SK-N-SH (cell line): ENCODE measurements at regions of chr10 and their contacts with region 1.

Region 1: DNA sequence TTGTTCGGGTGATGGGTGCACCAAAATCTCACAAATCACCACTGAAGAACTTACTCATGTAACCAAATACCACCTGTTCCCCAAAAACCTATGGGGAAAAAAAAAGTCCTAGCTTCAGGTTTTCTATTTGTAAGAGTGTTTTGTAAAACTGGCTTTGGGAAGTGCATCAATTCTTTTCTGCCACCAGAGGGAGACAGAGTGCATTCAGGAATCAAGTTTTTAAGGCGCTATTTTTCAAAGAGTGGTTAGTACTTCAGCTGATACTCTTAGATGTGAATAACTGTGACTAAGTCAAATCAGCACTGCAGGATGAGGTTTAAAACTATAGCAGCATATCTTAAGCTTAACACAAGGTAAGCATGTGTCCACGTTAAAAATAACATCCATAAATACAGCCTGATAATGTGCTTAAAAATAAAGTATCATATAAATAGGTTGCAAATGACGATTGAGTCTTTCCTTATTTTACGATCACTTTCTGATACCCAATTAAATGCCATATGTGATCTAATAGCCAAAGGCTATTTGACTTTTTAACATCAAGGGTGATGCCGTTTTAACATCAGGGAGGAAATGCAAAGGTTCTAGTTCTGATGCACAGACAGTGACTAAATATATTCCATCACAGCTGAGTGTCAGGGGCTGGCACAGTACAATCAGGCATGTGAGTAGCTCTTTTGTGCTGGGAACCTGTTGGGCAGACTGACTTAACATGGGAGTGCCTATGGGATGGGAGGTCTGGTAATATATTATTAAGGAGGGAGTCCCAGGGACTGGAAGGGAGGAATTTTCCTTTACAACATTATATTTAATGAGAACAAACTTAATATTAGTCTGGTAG is 10.6 kb upstream of the LYZL2 start:
- DNase-seq: peak; percentile 48
- H3K4me3 ChIP-seq: peak overlapping the region in 1 of 2 experiments; percentile 23; a peak in 1 of 4 replicates
- H3K27ac ChIP-seq: no peak overlapping the region
- H3K4me1 ChIP-seq: no peaks in the 10 kb centered on the region
- H3K27me3 ChIP-seq: no peaks in the 10 kb centered on the region
- CTCF ChIP-seq: peak; percentile 94
- EP300 ChIP-seq: no peak
- RAD21 ChIP-seq: peak; percentile 56

Region 2: GRCh38 chr10:30581779-30582380 is 58.3 kb before region 1 on chr10:
- CTCF ChIA-PET with region 1: interaction called, 13 read pairs
- POLR2A ChIA-PET with region 1: no interaction called
- DNase-seq: peak; percentile 68
- H3K4me3 ChIP-seq: no peak overlapping the region; a peak in 1 of 4 replicates
- H3K27ac ChIP-seq: no peak overlapping the region
- H3K4me1 ChIP-seq: peaks cover 3 to 4% of the 10 kb centered on the region in 2 experiments; a peak in 2 of 4 replicates
- H3K27me3 ChIP-seq: no peaks in the 10 kb centered on the region
- CTCF ChIP-seq: peak; percentile 89
- EP300 ChIP-seq: no peak
- RAD21 ChIP-seq: peak; percentile 59

Region 3: GRCh38 chr10:30606313-30606712 is 33.9 kb before region 1 on chr10:
- CTCF ChIA-PET with region 1: interaction called, 14 read pairs
- POLR2A ChIA-PET with region 1: no interaction called
- DNase-seq: no peak
- H3K4me3 ChIP-seq: no peak overlapping the region
- H3K27ac ChIP-seq: no peak overlapping the region
- H3K4me1 ChIP-seq: peaks cover 0 to 2% of the 10 kb centered on the region in 2 experiments; a peak in 1 of 4 replicates
- H3K27me3 ChIP-seq: no peaks in the 10 kb centered on the region
- CTCF ChIP-seq: no peak
- EP300 ChIP-seq: no peak
- RAD21 ChIP-seq: no peak

Region 4: GRCh38 chr10:30625080-30625479 is 15.1 kb before region 1 on chr10:
- CTCF ChIA-PET with region 1: interaction called, 31 read pairs
- POLR2A ChIA-PET with region 1: no interaction called
- DNase-seq: no peak
- H3K4me3 ChIP-seq: no peak overlapping the region
- H3K27ac ChIP-seq: no peak overlapping the region
- H3K4me1 ChIP-seq: no peaks in the 10 kb centered on the region; a peak in 1 of 4 replicates
- H3K27me3 ChIP-seq: no peaks in the 10 kb centered on the region
- CTCF ChIP-seq: no peak
- EP300 ChIP-seq: no peak
- RAD21 ChIP-seq: no peak

Region 5: GRCh38 chr10:30656233-30656632 is 16.1 kb after region 1 on chr10:
- CTCF ChIA-PET with region 1: interaction called, 24 read pairs
- POLR2A ChIA-PET with region 1: no interaction called
- DNase-seq: no peak
- H3K4me3 ChIP-seq: no peak overlapping the region
- H3K27ac ChIP-seq: no peak overlapping the region
- H3K4me1 ChIP-seq: no peaks in the 10 kb centered on the region; a peak in 2 of 4 replicates
- H3K27me3 ChIP-seq: no peaks in the 10 kb centered on the region; the same call in 1 of the 2 replicates
- CTCF ChIP-seq: no peak
- EP300 ChIP-seq: no peak
- RAD21 ChIP-seq: no peak

Region 6: DNA sequence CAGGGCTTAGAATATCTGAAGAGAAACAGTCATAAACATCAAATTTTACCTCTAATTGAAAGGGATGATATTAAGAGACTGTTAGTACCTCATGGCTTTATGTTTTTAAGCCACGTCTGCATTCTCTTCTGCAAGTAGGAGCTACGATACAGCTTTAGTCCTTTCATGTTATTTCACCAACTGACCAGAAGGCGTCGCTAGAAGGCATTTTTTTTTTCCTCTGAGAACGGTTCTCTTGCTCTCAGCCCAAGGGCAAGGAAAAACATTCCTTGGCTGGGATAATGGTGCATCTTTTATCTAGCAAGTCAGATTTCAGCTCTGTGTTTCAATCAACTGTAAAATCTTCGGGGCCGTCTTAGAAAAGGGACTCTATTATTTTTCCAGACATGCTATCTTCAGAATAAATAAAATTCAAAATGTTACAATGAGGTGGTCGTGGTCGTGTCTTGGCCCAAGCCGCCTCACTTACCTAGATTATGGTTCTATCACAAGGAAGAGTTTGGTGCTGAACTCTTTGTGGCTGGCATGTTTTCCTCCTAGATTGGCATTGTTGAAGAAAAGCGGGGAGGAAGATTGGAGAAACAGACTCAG is 31.0 kb after region 1 on chr10:
- CTCF ChIA-PET with region 1: interaction called, 16 read pairs
- POLR2A ChIA-PET with region 1: no interaction called
- DNase-seq: peak; percentile 55
- H3K4me3 ChIP-seq: peak overlapping the region; percentile 14 to 27; a peak in 2 of 4 replicates
- H3K27ac ChIP-seq: no peak overlapping the region
- H3K4me1 ChIP-seq: peaks cover 0 to 5% of the 10 kb centered on the region in 2 experiments; a peak in 1 of 4 replicates
- H3K27me3 ChIP-seq: no peaks in the 10 kb centered on the region
- CTCF ChIP-seq: peak; percentile 77
- EP300 ChIP-seq: no peak
- RAD21 ChIP-seq: peak; percentile 60

Region 7: DNA sequence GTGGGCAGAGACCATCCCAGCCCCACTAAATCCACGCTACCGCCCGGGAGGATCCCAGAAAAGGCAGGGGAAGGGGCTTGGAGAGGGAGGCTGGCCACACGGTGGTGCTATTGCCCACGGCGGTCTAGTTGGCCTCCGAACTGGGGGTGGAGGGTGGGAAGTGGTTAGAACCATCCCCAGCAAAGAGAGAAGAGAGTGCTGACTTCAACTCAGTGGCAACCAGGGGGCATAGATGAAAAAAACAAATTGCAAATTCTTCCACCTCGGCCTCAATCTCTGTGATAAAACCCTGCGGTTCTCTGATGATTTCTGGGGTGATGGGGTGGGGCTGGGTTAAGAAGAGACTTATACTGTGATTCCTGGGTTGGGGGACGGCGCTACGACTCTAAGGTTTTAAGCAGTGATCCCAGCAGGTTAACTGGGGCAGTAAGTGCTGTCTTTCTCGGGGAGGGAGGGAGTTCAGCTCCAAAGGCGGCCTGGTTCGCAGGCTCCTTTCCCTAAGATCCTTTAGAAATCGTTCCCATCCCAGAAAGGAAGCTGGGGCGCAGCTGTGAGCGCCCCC is 143.9 kb after region 1 on chr10:
- CTCF ChIA-PET with region 1: no interaction called
- POLR2A ChIA-PET with region 1: no interaction called
- DNase-seq: peak; percentile 95
- H3K4me3 ChIP-seq: peak overlapping the region; percentile 36 to 64; a peak in 3 of 4 replicates
- H3K27ac ChIP-seq: peak overlapping the region; percentile 70 to 91
- H3K4me1 ChIP-seq: peaks cover 19 to 25% of the 10 kb centered on the region in 2 experiments
- H3K27me3 ChIP-seq: no peaks in the 10 kb centered on the region
- CTCF ChIP-seq: peak; percentile 94
- EP300 ChIP-seq: no peak
- RAD21 ChIP-seq: peak; percentile 93

Region 8: GRCh38 chr10:30812018-30812851 is 172.1 kb after region 1 on chr10:
- CTCF ChIA-PET with region 1: no interaction called
- POLR2A ChIA-PET with region 1: no interaction called
- DNase-seq: no peak
- H3K4me3 ChIP-seq: no peak overlapping the region
- H3K27ac ChIP-seq: no peak overlapping the region
- H3K4me1 ChIP-seq: peaks cover 9 to 11% of the 10 kb centered on the region in 2 experiments; a peak in 2 of 4 replicates
- H3K27me3 ChIP-seq: no peaks in the 10 kb centered on the region
- CTCF ChIP-seq: no peak
- EP300 ChIP-seq: no peak
- RAD21 ChIP-seq: no peak

Region 9: DNA sequence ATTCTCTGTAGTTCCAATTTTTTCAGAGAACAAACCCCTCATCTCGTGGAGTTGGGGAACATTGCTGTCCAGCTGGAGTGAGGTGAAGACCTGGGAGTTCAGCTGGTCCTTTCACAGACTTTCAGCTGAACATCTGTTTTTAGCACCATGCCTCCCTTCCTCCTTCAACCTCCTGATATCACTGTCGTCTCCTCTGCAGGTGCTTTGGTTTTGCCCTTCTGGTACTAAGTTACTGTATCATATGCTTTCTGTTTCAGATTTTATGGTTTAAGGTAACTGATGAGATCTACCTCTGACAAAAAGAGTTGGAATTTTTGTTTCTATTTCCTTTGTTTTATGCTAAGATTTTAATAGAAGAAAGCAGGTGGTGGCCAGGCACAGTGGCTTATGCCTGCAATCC is 288.6 kb after region 1 on chr10:
- CTCF ChIA-PET with region 1: no interaction called
- POLR2A ChIA-PET with region 1: no interaction called
- DNase-seq: no peak
- H3K4me3 ChIP-seq: no peak overlapping the region
- H3K27ac ChIP-seq: no peak overlapping the region
- H3K4me1 ChIP-seq: no peaks in the 10 kb centered on the region
- H3K27me3 ChIP-seq: no peaks in the 10 kb centered on the region
- CTCF ChIP-seq: no peak
- EP300 ChIP-seq: no peak
- RAD21 ChIP-seq: no peak